Heart right ventricle (tissue), 16 donors: ENCODE measurements at regions of chr3 and their contacts with region 1.

Region 1: DNA sequence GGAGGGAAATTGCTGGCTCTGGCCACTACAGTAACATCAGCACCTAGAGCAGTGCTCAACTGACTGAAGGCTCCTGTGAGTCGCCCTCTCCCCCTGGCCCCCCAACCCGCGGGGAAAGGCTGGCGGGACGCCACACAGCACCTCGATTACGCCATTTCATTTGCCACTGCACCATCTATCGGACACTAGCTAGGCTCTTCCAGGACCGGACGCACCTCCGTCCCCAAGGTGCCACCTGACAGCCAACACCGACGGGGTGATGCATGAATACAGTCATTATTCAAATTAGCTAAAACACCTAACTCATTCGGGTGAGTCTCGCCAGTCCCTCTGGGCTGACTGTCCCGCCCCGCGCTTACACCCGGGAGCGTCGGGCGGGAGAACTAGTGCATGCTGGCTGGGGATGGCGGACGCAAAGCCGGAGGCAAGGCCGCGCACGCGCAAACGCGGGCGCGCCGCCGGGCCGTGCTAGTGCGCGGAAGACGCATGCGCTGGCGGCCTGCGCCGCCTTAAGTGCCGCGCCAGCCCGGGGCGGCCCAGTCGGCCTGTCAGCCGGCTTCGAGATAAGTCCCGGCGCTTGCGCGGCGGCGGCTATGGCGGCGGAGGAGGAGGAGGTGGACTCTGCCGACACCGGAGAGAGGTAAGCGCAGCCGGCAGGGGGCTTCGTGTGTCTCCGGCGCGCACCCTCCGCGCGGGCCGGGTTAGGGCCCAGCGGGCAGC is at the start of gene ABHD5:
- DNase-seq: peak; percentile 87 to 94
- ATAC-seq: peak; percentile 97 to 99 (median 98)
- H3K4me3 ChIP-seq: peak within 1 kb of the TSS; percentile 52 to 99 (median 88)
- H3K27ac ChIP-seq: peak within 1 kb of the TSS; percentile 65 to 97 (median 94)
- H3K4me1 ChIP-seq: peaks cover 2 to 43% (median 19%) of the 10 kb centered on the region in 9 donors
- H3K27me3 ChIP-seq: no peaks in the 10 kb centered on the region
- CTCF ChIP-seq: peak in 4 of 9 donors; percentile 28 to 44 (median 30)
- total RNA-seq, gene ABHD5: 23.0 to 30.9 (median 28.0) TPM

Region 2: DNA sequence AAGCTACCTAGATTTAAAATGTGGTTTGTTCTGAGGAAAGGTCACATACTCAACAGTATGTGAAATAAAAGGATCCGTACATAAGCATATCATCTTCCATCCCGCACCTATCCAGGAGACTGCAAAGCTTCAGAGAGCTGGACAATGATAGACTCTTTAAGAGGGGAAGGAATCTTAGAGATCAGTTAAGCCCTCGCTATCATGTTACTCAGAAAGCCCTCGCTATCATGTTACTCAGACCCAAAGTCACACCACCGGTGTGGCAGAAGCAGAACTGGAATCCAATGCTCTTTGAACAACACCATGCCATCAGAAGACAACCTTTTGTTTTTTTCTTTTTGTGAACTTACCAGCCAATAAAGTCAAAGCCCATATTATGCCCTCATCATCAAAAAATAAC is 74.5 kb before region 1 on chr3:
- intact Hi-C with region 1: loop called in 6 of 10 experiments (anchors 2 to 10 kb)
- DNase-seq: no peak
- ATAC-seq: no peak
- H3K4me3 ChIP-seq: no peak overlapping the region
- H3K27ac ChIP-seq: no peak overlapping the region
- H3K4me1 ChIP-seq: peaks cover 0 to 9% (median 4%) of the 10 kb centered on the region in 9 donors
- H3K27me3 ChIP-seq: no peaks in the 10 kb centered on the region
- CTCF ChIP-seq: no peak

Region 3: DNA sequence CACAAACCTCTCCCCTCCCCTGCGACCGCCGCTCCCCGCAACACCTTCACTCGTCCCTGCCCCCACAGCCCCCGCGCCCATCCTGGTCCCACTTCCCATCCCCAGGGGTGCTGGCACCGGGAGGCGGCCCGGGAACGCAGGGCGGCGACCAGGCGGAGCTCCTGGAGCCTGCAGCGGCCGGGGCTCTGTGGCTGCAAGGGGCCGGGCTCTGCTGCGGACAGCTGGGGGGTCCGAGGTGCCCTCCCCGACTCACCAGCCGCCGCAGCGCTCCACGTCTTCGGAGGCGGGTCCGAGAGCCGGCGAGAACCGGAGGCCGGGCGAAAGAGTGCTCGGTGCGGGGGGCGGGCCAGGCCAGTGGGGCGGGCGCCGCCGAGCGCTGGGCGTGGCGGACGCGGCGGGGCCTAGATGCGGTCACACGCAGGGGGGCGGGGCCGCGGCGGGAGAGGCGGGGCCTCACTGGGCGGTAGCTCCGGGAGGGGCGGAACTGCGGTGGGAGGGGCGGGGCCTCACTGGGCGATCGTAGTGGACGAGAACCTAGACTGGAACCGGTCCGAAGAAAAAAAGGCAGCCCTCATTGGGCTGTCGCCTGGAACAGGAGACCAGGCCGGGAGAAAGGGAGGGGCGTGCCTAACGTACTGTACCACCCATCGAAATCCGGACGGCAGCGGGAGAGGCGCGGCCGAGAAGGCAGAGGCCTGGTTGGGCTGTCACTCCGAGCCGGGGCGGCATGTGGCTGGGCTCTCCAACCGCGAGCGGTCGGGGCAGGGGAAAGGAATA is 68.7 kb before region 1 on chr3 and contains the start of gene ANO10:
- intact Hi-C with region 1: loop called in 7 of 10 experiments (anchors 2 to 10 kb)
- DNase-seq: peak; percentile 99
- ATAC-seq: peak; percentile 98 to 100 (median 99)
- H3K4me3 ChIP-seq: peak within 1 kb of the TSS; percentile 64 to 97 (median 88)
- H3K27ac ChIP-seq: peak within 1 kb of the TSS; percentile 14 to 90 (median 82)
- H3K4me1 ChIP-seq: peaks cover 0 to 19% (median 12%) of the 10 kb centered on the region in 9 donors
- H3K27me3 ChIP-seq: no peaks in the 10 kb centered on the region
- CTCF ChIP-seq: no peak
- total RNA-seq, gene ANO10: 7.1 to 24.2 (median 13.3) TPM

Region 4: DNA sequence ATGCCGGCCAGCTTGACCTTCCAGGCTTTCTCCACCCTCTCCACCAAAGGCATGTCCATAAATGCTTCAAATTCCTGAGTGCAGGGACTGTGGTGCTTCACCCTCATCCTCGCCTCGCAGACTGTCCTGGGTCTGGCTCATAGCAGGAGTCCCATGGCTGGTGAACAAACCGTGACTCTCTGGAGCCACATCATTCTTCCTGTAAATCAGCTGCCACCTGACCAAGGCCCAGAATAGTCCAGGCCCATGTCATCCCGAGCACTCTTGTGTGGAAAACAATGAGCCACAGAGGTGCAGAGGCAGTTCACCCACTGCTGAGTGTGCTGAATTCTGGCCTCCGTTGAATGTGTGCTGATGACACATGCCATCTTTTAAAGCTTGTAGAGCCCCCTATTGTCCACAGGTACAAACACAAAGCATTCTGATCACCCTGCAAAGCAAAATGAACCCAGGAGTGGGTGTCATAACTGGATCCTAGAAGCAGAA is 68.8 kb after region 1 on chr3:
- intact Hi-C with region 1: loop called in 1 of 10 experiments (anchors 10 kb)
- DNase-seq: peak in 1 of 2 donors; percentile 22
- ATAC-seq: peak; percentile 56 to 95 (median 88)
- H3K4me3 ChIP-seq: no peak overlapping the region
- H3K27ac ChIP-seq: peak overlapping the region in 9 of 10 donors; percentile 28 to 79 (median 70)
- H3K4me1 ChIP-seq: peaks cover 8 to 21% (median 17%) of the 10 kb centered on the region in 9 donors
- H3K27me3 ChIP-seq: no peaks in the 10 kb centered on the region
- CTCF ChIP-seq: peak in 5 of 9 donors; percentile 12 to 37 (median 23)